AG04449 (cell line): ENCODE measurements at regions of chr7 and their contacts with region 1.

Region 1: DNA sequence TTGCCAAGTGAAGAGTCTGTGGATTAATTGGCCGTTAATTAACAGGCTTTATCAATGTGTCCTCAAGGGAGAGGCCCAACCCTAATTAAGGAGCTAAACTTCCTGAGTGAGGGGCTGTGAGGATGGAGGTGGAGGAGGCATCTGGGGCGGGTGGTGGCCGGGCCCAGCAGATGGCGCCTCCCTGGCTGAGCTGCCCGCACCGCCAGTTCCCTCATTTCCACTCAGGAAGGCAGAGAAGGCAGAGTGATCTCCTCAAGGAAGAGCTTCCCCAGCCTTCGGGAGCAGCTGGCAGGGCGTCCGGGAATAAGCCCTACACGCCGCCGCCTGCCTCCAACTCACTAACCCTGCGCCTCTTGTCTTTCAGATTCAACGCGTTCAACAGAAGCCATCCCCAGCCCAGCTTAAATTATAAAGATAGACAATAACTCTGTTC is 112.2 kb downstream of the CYTH3 start:
- DNase-seq: peak; percentile 16
- H3K4me3 ChIP-seq: no peak overlapping the region
- CTCF ChIP-seq: peak; percentile 93

Region 2: GRCh38 chr7:5854738-5855137 is 305.5 kb before region 1 on chr7:
- CTCF ChIA-PET with region 1: interaction called, 10 read pairs
- POLR2A ChIA-PET with region 1: no interaction called
- DNase-seq: no peak
- H3K4me3 ChIP-seq: no peak overlapping the region
- CTCF ChIP-seq: no peak

Region 3: GRCh38 chr7:6148724-6149360 is 11.4 kb before region 1 on chr7:
- CTCF ChIA-PET with region 1: interaction called, 20 read pairs
- POLR2A ChIA-PET with region 1: no interaction called
- DNase-seq: no peak
- H3K4me3 ChIP-seq: no peak overlapping the region
- CTCF ChIP-seq: no peak

Region 4: GRCh38 chr7:6256677-6257535 is 96.7 kb after region 1 on chr7:
- CTCF ChIA-PET with region 1: interaction called, 11 read pairs
- POLR2A ChIA-PET with region 1: no interaction called
- DNase-seq: no peak
- H3K4me3 ChIP-seq: no peak overlapping the region
- CTCF ChIP-seq: no peak

Region 5: DNA sequence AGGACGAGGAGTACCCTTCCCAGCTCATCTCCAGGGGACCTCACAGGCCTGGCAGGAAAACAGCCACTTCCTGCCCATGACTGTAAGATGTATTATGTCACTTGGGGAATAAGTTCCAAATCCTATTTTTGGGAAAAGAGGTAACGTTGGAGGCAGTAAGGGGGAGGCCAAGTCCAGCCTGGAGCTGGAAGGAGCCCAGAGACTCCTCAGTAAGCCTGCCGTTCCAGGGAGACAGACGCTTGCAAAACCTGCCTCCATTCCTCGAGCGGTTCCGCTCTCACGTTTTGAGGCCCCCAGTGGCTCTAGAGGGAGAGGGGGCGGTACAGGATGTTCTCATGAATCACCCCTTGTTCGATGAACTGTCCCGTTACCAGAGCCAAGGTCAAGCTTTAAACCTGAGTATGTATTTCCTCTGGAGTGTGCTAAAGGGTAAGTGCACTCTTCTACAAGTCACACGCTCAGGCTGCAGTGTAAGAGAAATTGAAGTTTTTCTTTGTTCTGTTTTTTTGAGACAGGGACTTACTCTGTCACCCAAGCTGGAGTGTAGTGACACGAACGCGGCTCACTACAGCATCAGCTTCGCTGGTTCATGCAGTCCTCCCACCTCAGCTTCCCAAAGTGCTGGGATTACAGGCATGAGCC is 157.7 kb after region 1 on chr7:
- CTCF ChIA-PET with region 1: interaction called, 277 read pairs
- POLR2A ChIA-PET with region 1: interaction called, 5 read pairs
- DNase-seq: no peak
- H3K4me3 ChIP-seq: no peak overlapping the region
- CTCF ChIP-seq: no peak

Region 6: DNA sequence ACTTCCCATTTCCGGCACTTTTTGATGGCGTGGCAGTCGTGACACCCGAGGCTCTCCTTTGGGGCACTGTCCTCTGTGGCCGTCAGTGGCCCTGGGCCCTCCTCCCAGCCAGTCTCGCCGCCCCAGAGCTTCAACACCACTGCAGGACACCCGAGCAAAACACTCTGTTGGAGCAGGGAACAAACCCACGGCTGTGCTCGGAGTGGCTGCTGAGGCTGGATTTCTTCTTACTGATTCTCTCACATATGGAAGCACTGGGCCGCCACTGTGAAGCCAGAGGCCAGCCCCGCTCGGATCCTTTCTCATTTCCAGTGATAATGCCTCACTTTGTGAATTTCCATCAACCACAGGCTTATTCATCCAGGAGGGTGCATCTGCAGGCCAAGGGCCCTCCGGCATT is 170.4 kb after region 1 on chr7:
- CTCF ChIA-PET with region 1: interaction called, 277 read pairs
- POLR2A ChIA-PET with region 1: no interaction called
- DNase-seq: no peak
- H3K4me3 ChIP-seq: no peak overlapping the region
- CTCF ChIP-seq: no peak

Region 7: GRCh38 chr7:7099584-7100014 is 939.4 kb after region 1 on chr7:
- CTCF ChIA-PET with region 1: no interaction called
- POLR2A ChIA-PET with region 1: no interaction called
- DNase-seq: peak; percentile 83
- H3K4me3 ChIP-seq: no peak overlapping the region
- CTCF ChIP-seq: no peak